ENCODE measurements at regions of chr3 and their contacts with region 1.

Region 1: DNA sequence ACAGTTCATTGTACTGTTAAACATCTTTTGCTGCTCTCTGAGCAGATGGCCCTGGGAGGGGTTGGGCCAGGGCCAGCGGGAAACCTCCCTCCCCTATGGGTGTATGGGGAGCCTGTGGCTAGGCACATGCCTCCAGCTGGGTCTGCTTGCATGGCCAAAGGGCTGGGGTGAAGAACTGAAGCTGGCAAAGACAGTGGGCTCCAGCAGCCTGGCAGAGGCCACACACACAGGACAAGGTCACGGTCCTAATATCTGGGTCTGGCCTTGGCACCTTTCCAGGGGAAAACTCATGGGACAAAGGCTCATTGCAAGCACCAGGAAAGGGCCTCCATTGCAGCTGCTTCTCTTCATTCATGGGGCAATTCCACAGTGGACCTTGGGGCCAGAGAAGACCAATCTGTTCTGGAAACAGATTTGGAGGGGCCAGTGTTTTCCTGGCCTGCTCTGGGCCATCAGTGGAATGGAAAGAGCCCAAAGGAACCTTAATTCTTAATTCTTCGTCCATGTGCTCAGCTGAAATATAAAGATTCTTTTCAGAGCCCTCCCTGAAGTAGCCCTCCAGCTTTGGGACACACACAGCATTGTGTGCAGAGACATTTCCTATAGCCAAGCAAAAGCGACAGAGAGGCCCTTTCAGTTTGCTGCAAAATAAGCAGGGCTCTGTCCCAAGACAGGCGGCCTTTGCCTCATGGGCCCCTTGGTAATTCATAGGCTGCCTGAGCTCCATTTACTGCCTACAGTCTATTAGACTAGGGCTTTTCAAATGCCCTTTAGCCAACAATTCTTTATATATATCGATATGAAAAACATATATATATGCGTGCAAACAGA is 11.3 kb upstream of the LIMD1 start:
- DNase-seq: peak; percentile 77 to 78
- ATAC-seq: peak; percentile 82 to 95 (median 92)
- H3K4me3 ChIP-seq: no peak overlapping the region
- H3K27ac ChIP-seq: peak overlapping the region; percentile 12 to 73 (median 53)
- H3K4me1 ChIP-seq: peaks cover 7 to 36% (median 23%) of the 10 kb centered on the region in 9 donors
- H3K27me3 ChIP-seq: no peaks in the 10 kb centered on the region
- CTCF ChIP-seq: no peak

Region 2: GRCh38 chr3:45537970-45538640 is 45.1 kb before region 1 on chr3:
- intact Hi-C with region 1: loop called in 1 of 10 experiments (anchors 5 kb)
- DNase-seq: peak; percentile 42 to 70
- ATAC-seq: peak; percentile 65 to 87 (median 80)
- H3K4me3 ChIP-seq: peak overlapping the region in 1 of 10 donors; percentile 5
- H3K27ac ChIP-seq: peak overlapping the region; percentile 41 to 89 (median 70)
- H3K4me1 ChIP-seq: peaks cover 6 to 65% (median 46%) of the 10 kb centered on the region in 9 donors
- H3K27me3 ChIP-seq: no peaks in the 10 kb centered on the region
- CTCF ChIP-seq: no peak

Region 3: GRCh38 chr3:45560281-45560971 is 22.8 kb before region 1 on chr3:
- intact Hi-C with region 1: loop called in 1 of 10 experiments (anchors 2 kb)
- DNase-seq: peak; percentile 72 to 84
- ATAC-seq: peak; percentile 88 to 95 (median 94)
- H3K4me3 ChIP-seq: no peak overlapping the region
- H3K27ac ChIP-seq: peak overlapping the region; percentile 79 to 93 (median 84)
- H3K4me1 ChIP-seq: peaks cover 9 to 41% (median 27%) of the 10 kb centered on the region in 9 donors
- H3K27me3 ChIP-seq: no peaks in the 10 kb centered on the region
- CTCF ChIP-seq: no peak

Region 4: GRCh38 chr3:46065294-46065721 is 482.1 kb after region 1 on chr3:
- intact Hi-C with region 1: no loop called
- DNase-seq: peak in 1 of 2 donors; percentile 37
- ATAC-seq: peak; percentile 32 to 82 (median 64)
- H3K4me3 ChIP-seq: no peak overlapping the region
- H3K27ac ChIP-seq: peak overlapping the region in 7 of 10 donors; percentile 4 to 57 (median 30)
- H3K4me1 ChIP-seq: peaks cover 0 to 60% (median 24%) of the 10 kb centered on the region in 9 donors
- H3K27me3 ChIP-seq: peaks cover 0 to 8% (median 0%) of the 10 kb centered on the region in 7 donors
- CTCF ChIP-seq: no peak

Measured in heart right ventricle (tissue), 16 donors.